ENCODE measurements at regions of chr1 and their contacts with region 1.

Region 1: GRCh38 chr1:153532769-153533599 is 2.8 kb downstream of the S100A6 start:
- DNase-seq: peak; percentile 94
- H3K4me3 ChIP-seq: peak overlapping the region; percentile 26
- H3K27ac ChIP-seq: peak overlapping the region; percentile 25
- H3K4me1 ChIP-seq: peaks cover 34% of the 10 kb centered on the region
- H3K27me3 ChIP-seq: no peaks in the 10 kb centered on the region
- CTCF ChIP-seq: peak; percentile 98

Region 2: GRCh38 chr1:153568367-153569099 is 35.5 kb after region 1 on chr1:
- CTCF ChIA-PET with region 1: interaction called, 14 read pairs
- POLR2A ChIA-PET with region 1: no interaction called
- intact Hi-C with region 1: loop called (anchors 1 kb)
- DNase-seq: peak; percentile 91
- H3K4me3 ChIP-seq: no peak overlapping the region
- H3K27ac ChIP-seq: no peak overlapping the region
- H3K4me1 ChIP-seq: peaks cover 26% of the 10 kb centered on the region
- H3K27me3 ChIP-seq: no peaks in the 10 kb centered on the region
- CTCF ChIP-seq: peak; percentile 98

Region 3: DNA sequence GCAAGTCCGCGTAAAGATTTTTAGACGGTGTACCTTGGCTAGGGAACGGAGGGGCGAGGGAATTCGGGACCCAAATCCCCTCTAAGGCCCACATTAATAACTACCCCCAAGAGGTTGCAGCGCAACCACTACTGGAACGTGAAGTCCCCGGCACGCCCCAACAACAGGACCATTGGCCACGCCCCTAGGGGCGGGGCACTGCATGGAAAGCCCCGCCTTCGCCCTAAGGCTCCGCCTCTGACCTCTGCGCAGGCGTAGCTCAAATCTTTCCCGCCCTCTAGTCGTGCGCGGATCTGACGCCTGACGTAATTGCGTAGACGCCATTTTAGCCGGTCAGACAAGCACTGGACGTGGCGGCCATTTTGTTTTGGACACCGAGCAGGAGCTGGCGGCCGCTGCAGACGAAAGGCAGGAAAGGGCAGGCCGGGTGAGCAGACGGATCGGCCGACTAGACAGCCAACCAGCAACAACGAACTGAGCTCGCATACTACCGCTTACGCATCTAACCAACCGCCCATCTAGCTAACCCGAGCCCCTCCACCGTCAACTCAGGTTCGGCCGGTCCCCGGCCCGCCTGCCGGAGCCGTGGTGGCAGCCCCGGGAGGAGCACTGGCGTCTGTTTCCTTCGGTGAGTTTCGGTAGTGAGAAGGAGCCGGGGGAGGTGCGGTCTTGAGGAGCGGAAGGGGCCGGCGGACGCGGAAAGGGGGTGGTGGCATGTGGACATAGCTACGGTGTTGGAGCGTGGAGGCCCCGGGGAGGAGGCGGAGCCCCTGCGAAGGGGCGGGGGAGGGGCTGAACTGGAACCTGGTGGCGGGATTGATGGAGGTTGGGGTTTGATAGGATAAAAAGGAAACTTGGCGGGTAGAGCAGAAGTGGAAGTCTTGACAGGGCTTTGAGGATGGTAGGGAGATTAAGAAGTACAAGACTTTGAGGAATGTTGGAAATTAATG is 101.0 kb after region 1 on chr1 and contains the start of gene CHTOP:
- CTCF ChIA-PET with region 1: interaction called, 4 read pairs
- POLR2A ChIA-PET with region 1: no interaction called
- intact Hi-C with region 1: loop called (anchors 5 kb)
- DNase-seq: peak; percentile 99
- H3K4me3 ChIP-seq: peak within 1 kb of the TSS; percentile 91
- H3K27ac ChIP-seq: peak within 1 kb of the TSS; percentile 100
- H3K4me1 ChIP-seq: peaks cover 8% of the 10 kb centered on the region
- H3K27me3 ChIP-seq: no peaks in the 10 kb centered on the region
- CTCF ChIP-seq: no peak
- total RNA-seq, gene CHTOP: 99.8 and 101 TPM in 2 replicates

Region 4: GRCh38 chr1:154129391-154129970 is 596.5 kb after region 1 on chr1:
- CTCF ChIA-PET with region 1: no interaction called
- POLR2A ChIA-PET with region 1: interaction called, 16 read pairs
- intact Hi-C with region 1: no loop called
- DNase-seq: no peak
- H3K4me3 ChIP-seq: no peak overlapping the region
- H3K27ac ChIP-seq: no peak overlapping the region
- H3K4me1 ChIP-seq: no peaks in the 10 kb centered on the region
- H3K27me3 ChIP-seq: no peaks in the 10 kb centered on the region
- CTCF ChIP-seq: no peak